K562 (cell line): ENCODE measurements at regions of chr15 and their contacts with region 1.

Region 1: DNA sequence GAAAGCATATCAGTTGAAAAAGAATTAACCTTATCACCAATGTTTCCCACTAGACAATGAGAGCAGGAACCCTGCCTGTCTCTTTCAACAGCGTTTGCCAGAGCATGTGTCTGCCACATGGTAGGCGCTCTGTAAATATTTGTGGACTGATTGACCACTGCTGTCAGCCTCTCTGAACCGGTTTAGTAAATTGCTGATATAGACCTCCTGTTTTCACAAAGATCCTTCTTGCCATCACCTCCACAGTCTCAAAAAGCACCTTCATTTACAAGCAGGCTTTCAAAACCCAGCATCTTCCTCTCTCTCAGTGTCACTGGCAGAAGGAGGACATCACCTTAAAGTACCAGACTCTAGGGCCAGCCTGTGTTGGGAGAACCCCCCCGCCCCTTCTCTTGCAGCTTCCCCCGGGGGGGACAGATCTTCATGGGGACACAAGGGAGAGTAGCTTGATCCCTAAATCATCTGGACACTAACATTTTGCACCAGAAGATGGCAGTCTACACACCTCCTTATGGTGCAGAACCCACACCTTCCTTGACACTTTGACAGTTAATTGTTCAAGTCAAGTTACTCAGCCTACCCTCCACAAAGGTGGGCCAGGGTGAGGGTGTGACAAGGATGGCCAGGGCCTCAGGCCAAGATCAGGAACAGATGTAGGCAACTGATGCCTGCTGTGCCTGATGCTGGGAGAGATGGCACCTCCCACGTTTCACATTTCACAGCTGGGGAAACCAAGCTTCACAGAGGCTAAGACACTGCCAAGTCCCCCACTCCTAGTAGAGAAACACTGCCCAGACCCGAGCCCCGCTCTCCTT is 37.8 kb upstream of the USP3 start:
- DNase-seq: peak; percentile 66 to 81 (median 74)
- ATAC-seq: peak; percentile 96
- H3K4me3 ChIP-seq: no peak overlapping the region
- H3K27ac ChIP-seq: no peak overlapping the region
- H3K4me1 ChIP-seq: peaks cover 0 to 8% of the 10 kb centered on the region in 2 experiments; a peak in 2 of 5 replicates
- H3K27me3 ChIP-seq: no peaks in the 10 kb centered on the region
- CTCF ChIP-seq: peak; percentile 71 to 77 (median 76)
- EP300 ChIP-seq: no peak
- POLR2A ChIP-seq: no peak
- RAD21 ChIP-seq: peak; percentile 74 to 89

Region 2: GRCh38 chr15:63041974-63042819 is 424.4 kb before region 1 on chr15 and contains the start of gene TPM1:
- CTCF ChIA-PET with region 1: no interaction called
- POLR2A ChIA-PET with region 1: no interaction called
- in situ Hi-C with region 1: no loop called
- intact Hi-C with region 1: no loop called
- DNase-seq: no peak
- ATAC-seq: no peak
- H3K4me3 ChIP-seq: no peak within 1 kb of the TSS
- H3K27ac ChIP-seq: no peak within 1 kb of the TSS
- H3K4me1 ChIP-seq: peaks cover under 1 to 19% of the 10 kb centered on the region in 2 experiments; a peak in 3 of 5 replicates
- H3K27me3 ChIP-seq: peaks cover 54 to 78% of the 10 kb centered on the region in 2 experiments
- CTCF ChIP-seq: no peak
- EP300 ChIP-seq: no peak
- POLR2A ChIP-seq: no peak
- RAD21 ChIP-seq: no peak
- polyA plus RNA-seq, gene TPM1: 8.1 to 11.1 TPM

Region 3: DNA sequence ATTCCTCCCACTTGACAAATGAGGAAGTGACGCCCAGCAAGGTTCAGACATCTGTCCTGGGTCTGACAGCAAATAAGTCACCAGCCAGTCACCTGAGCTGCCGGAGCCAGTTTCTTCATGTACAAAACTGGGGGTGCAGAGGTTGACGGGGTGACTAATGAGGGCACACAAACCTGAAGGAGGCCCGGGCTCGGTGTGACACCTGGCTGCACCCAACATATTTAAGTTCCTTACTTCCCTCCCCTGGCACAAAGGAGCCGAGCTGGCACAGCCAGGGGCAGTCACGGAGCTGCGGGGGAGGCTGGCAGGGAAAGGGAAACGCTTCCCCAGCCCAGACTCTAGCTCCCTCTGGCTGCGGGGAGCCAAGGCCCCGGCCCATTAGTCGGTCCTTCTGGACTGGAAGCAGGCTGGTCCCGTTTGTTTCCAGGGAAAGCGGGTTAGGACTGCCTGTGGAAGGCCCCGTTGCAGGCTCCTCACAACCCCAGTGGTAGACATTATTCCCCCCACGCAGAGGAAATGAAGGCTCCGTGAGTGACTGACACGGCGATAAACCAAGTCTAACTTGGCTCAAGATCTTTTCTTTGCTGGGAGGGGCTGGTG is 132.9 kb after region 1 on chr15:
- CTCF ChIA-PET with region 1: interaction called, 3 read pairs
- POLR2A ChIA-PET with region 1: interaction called, 3 read pairs
- in situ Hi-C with region 1: no loop called
- intact Hi-C with region 1: loop called (anchors 1 kb)
- DNase-seq: peak in 1 of 4 experiments; percentile 16
- ATAC-seq: peak; percentile 37; the same call in 2 of the 3 replicates
- H3K4me3 ChIP-seq: no peak overlapping the region
- H3K27ac ChIP-seq: no peak overlapping the region
- H3K4me1 ChIP-seq: peaks cover 0 to 18% of the 10 kb centered on the region in 2 experiments; a peak in 2 of 5 replicates
- H3K27me3 ChIP-seq: no peaks in the 10 kb centered on the region
- CTCF ChIP-seq: peak; percentile 41 to 56 (median 50)
- EP300 ChIP-seq: no peak
- POLR2A ChIP-seq: no peak
- RAD21 ChIP-seq: peak in 1 of 2 experiments; percentile 73; a peak in 2 of 4 replicates

Region 4: GRCh38 chr15:63626955-63627354 is 160.4 kb after region 1 on chr15:
- CTCF ChIA-PET with region 1: no interaction called
- POLR2A ChIA-PET with region 1: no interaction called
- in situ Hi-C with region 1: no loop called
- intact Hi-C with region 1: no loop called
- DNase-seq: no peak
- ATAC-seq: no peak
- H3K4me3 ChIP-seq: no peak overlapping the region
- H3K27ac ChIP-seq: no peak overlapping the region
- H3K4me1 ChIP-seq: no peaks in the 10 kb centered on the region
- H3K27me3 ChIP-seq: no peaks in the 10 kb centered on the region
- CTCF ChIP-seq: no peak
- EP300 ChIP-seq: no peak
- POLR2A ChIP-seq: no peak
- RAD21 ChIP-seq: no peak